ENCODE measurements at regions of chr10 and their contacts with region 1.

Region 1: DNA sequence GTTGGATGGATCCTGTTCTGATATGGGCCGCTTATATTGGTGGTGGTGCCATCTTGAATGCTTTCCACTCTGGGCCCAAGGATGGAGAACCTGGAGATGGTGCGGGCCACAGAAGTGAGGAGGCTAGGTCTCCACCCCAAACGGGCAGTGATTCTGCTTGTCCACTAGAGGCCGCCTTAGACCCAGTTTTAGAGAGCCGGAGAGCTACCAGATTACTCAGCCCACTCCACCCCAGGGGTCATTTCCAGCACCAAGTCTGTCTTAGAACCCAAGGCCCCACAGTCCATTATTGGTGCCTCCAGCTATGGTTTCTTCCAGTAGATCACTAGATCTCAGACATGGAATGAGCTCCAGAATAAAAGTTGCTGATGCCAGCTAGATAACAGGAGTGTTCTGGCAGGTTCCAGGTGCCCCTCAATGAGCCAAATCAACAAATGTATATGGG is 11.8 kb upstream of the CAMK2G start:
- DNase-seq: peak; percentile 57
- ATAC-seq: peak; percentile 95
- H3K4me3 ChIP-seq: no peak overlapping the region
- H3K27ac ChIP-seq: no peak overlapping the region
- H3K4me1 ChIP-seq: peaks cover 13% of the 10 kb centered on the region; the same call in 1 of the 2 replicates
- H3K27me3 ChIP-seq: peaks cover 2 to 10% of the 10 kb centered on the region in 2 experiments; a peak in 4 of 5 replicates
- CTCF ChIP-seq: peak; percentile 91
- EP300 ChIP-seq: no peak
- POLR2A ChIP-seq: no peak
- RAD21 ChIP-seq: peak; percentile 93

Region 2: DNA sequence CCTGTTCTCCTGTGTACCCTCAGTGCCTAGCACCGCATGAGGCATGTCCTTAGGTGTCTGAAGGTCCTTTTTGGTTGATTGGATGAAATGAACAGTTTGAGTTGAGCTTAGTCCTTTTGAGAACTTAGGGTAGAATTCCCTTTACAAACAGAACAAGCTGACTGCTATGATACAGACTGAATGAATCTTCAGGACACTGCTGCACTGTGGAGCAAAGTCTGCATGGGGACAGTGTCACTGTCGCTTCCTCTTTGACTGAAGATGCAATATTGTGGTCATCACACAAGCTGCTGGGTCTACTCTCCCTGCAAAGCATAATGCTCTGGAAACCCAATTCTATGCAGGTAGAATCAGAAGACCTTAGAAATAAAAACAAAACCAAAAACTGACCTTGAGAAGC is 16.2 kb after region 1 on chr10:
- CTCF ChIA-PET with region 1: no interaction called
- POLR2A ChIA-PET with region 1: no interaction called
- in situ Hi-C with region 1: no loop called
- intact Hi-C with region 1: loop called (anchors 2 kb)
- DNase-seq: no peak
- ATAC-seq: peak; percentile 74
- H3K4me3 ChIP-seq: no peak overlapping the region
- H3K27ac ChIP-seq: no peak overlapping the region
- H3K4me1 ChIP-seq: peaks cover 54% of the 10 kb centered on the region
- H3K27me3 ChIP-seq: no peaks in the 10 kb centered on the region; a peak in 1 of 5 replicates
- CTCF ChIP-seq: no peak
- EP300 ChIP-seq: no peak
- POLR2A ChIP-seq: no peak
- RAD21 ChIP-seq: no peak

Region 3: DNA sequence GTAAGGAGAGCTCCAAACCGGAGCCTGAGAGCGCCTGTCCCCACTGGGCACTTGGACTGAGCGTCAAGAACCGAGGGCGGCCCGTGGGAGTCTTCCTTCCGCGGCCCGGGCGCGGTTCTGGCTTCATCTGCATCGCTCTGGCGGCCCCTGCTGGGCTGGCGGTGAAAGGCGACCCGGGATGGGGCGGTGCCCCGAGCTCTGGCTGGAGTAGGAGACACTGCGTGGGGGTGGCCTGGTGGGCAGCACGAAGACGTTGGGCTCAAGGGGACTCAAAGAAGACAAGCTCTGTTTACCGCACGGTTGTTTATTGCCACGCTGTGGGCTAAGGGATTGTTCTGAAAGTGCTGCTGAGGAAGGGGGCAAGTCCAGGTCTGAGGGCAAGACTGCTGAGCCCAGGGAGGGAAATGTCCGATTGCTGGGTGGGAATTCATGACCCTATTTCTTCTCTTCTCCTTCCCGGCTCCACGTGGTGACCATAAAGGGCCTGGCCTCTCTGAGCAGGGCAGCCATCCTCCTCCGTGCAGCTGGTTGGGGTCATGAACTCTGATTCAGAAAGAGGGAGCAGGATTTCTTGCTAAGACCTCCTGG is 54.6 kb after region 1 on chr10:
- CTCF ChIA-PET with region 1: interaction called, 60 read pairs
- POLR2A ChIA-PET with region 1: no interaction called
- in situ Hi-C with region 1: loop called (anchors 5 kb)
- intact Hi-C with region 1: loop called (anchors 1 kb)
- DNase-seq: peak; percentile 32
- ATAC-seq: peak; percentile 96
- H3K4me3 ChIP-seq: peak overlapping the region in 2 of 3 experiments; percentile 21 to 52; a peak in 4 of 6 replicates
- H3K27ac ChIP-seq: no peak overlapping the region
- H3K4me1 ChIP-seq: peaks cover 7% of the 10 kb centered on the region
- H3K27me3 ChIP-seq: peaks cover 0 to 23% of the 10 kb centered on the region in 2 experiments; a peak in 3 of 5 replicates
- CTCF ChIP-seq: peak; percentile 97
- EP300 ChIP-seq: no peak
- POLR2A ChIP-seq: no peak
- RAD21 ChIP-seq: peak; percentile 92

Region 4: GRCh38 chr10:73956476-73957359 is 70.6 kb after region 1 on chr10:
- CTCF ChIA-PET with region 1: interaction called, 19 read pairs
- POLR2A ChIA-PET with region 1: no interaction called
- in situ Hi-C with region 1: no loop called
- intact Hi-C with region 1: loop called (anchors 1 kb)
- DNase-seq: no peak
- ATAC-seq: peak; percentile 50
- H3K4me3 ChIP-seq: no peak overlapping the region
- H3K27ac ChIP-seq: no peak overlapping the region
- H3K4me1 ChIP-seq: peaks cover 27% of the 10 kb centered on the region
- H3K27me3 ChIP-seq: no peaks in the 10 kb centered on the region
- CTCF ChIP-seq: no peak
- EP300 ChIP-seq: no peak
- POLR2A ChIP-seq: no peak
- RAD21 ChIP-seq: no peak

Region 5: DNA sequence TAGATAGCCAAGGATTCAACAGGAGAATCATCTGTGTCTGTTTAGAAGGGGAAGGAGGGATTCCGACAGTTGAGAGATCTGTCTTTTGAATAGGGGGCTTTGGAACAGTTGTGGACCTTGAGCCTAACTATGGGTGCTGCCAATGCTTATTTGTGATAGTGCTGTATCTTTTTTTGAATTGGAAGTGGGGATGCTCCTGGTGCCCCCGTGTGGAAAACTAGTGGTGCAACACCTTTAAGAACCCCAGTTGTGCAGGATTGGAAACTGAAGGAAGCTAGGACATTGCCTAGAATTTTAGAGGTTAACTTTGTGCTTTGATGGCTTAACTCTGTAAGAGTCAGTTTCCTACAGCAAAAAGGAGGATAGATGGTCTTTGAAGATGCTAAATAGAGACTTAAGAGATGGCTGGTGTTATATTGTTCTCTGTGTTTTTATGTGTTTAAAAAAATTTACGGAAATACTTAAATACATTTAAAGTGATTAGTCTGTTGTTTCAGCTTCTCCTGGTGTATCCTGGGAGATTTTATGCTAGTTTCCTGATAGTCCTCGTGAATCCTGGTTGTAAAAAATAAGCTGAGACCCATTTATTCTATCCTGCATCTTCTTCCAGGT is 195.2 kb after region 1 on chr10:
- CTCF ChIA-PET with region 1: interaction called, 14 read pairs
- POLR2A ChIA-PET with region 1: no interaction called
- in situ Hi-C with region 1: loop called (anchors 5 kb)
- intact Hi-C with region 1: loop called (anchors 2 kb)
- DNase-seq: peak; percentile 50
- ATAC-seq: peak; percentile 75
- H3K4me3 ChIP-seq: no peak overlapping the region
- H3K27ac ChIP-seq: no peak overlapping the region
- H3K4me1 ChIP-seq: no peaks in the 10 kb centered on the region
- H3K27me3 ChIP-seq: no peaks in the 10 kb centered on the region
- CTCF ChIP-seq: peak; percentile 69
- EP300 ChIP-seq: no peak
- POLR2A ChIP-seq: no peak
- RAD21 ChIP-seq: 0 out of 2 replicates have a peak, but pooled peaks have one; percentile 36

Measured in HepG2 (cell line).